A673 (cell line): ENCODE measurements at regions of chrX and their contacts with region 1.

Region 1: GRCh38 chrX:69524781-69525363 is 20.7 kb downstream of the NALF2 start:
- DNase-seq: no peak
- H3K4me3 ChIP-seq: no peak overlapping the region
- H3K27ac ChIP-seq: no peak overlapping the region
- H3K4me1 ChIP-seq: no peaks in the 10 kb centered on the region
- H3K27me3 ChIP-seq: no peaks in the 10 kb centered on the region
- CTCF ChIP-seq: no peak

Region 2: GRCh38 chrX:69746051-69746450 is 221.2 kb after region 1 on chrX:
- CTCF ChIA-PET with region 1: no interaction called
- POLR2A ChIA-PET with region 1: interaction called, 10 read pairs
- intact Hi-C with region 1: no loop called
- DNase-seq: no peak
- H3K4me3 ChIP-seq: no peak overlapping the region
- H3K27ac ChIP-seq: no peak overlapping the region
- H3K4me1 ChIP-seq: no peaks in the 10 kb centered on the region
- H3K27me3 ChIP-seq: no peaks in the 10 kb centered on the region
- CTCF ChIP-seq: no peak